Prostate gland (tissue), 2 donors: ENCODE measurements at regions of chr2 and their contacts with region 1.

Region 1: GRCh38 chr2:217899231-217900009 is 103.4 kb downstream of the TNS1 start:
- DNase-seq: peak; percentile 75
- H3K4me3 ChIP-seq: no peak overlapping the region
- H3K27ac ChIP-seq: peak overlapping the region; percentile 91 to 92
- H3K4me1 ChIP-seq: peaks cover 10% of the 10 kb centered on the region
- H3K27me3 ChIP-seq: no peaks in the 10 kb centered on the region
- CTCF ChIP-seq: peak; percentile 30 to 93 (median 68)
- POLR2A ChIP-seq: peak; percentile 52

Region 2: DNA sequence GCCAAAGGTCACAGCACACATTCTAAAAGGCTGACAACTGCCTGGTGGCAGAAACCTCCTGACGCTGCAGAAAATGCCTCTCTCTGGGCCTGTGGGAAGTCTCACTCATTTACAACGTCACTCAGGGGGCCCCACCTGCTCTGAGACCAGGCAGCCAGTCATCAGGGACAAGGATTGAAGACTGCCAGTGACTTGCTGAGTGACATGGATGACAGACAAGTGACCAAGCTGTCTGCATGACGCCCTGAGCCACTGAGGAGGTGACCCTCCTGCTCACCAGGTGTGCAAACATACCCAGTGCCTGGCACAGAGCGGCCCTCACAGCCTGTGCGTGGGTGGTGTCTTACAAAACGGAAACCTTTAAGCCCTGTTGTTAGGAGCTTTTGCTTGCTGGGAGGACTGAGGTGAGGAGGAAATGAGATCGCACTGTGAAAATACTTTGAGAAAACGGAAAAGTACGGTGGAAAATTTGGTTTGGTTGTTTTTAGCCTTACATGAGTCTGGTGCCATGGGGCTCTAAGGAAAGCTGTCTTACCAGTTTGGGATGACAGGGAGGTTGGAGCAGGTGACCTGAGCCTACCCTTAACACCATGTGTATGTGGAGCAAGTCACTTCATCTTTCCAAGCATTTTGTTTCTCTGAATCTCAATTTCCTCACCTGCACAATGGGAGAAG is 288.9 kb before region 1 on chr2:
- intact Hi-C with region 1: no loop called
- DNase-seq: no peak
- H3K4me3 ChIP-seq: no peak overlapping the region
- H3K27ac ChIP-seq: no peak overlapping the region
- H3K4me1 ChIP-seq: no peaks in the 10 kb centered on the region
- H3K27me3 ChIP-seq: no peaks in the 10 kb centered on the region
- CTCF ChIP-seq: no peak
- POLR2A ChIP-seq: no peak

Region 3: DNA sequence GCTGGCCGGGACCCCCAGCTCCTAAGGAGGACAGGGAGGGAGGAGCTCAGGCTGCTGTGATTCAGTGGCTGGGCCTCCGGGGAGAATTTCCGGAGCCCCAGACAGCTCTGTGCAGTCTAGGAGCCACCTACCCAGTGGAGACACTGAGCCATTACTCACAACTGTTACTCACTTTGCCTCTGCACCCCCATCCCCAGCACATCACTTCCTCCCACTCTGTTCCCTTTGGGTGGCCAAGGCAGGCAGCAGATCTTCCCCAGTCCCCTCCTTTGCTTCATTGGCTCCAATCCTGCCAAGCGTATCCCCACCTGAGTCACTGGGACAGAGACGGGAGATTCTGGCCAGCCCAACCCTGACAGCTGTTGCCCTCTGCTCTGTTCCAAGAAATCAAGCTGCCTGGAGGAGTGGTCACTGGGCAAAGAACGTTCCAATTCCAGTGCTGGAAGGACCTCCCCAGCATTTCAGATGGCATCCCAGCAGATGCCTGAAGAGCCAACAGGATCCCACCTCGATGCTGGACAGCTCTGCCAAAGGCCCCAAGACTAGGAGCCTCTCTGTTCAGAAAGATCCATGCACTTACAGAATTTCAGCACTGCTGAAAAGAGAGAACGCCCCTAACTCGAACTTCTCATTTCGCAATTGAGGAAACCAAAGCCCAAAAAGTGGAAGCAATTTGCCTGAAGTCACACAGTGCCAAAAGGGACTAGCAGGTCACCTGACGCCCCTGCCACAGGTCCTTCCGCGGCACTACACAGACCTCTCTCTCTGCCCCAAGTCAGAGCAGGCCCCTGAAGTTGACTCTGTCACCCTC is 35.1 kb after region 1 on chr2:
- intact Hi-C with region 1: loop called (anchors 5 kb)
- DNase-seq: no peak
- H3K4me3 ChIP-seq: peak overlapping the region in 1 of 2 donors; percentile 6
- H3K27ac ChIP-seq: peak overlapping the region; percentile 91 to 92
- H3K4me1 ChIP-seq: peaks cover 16% of the 10 kb centered on the region
- H3K27me3 ChIP-seq: no peaks in the 10 kb centered on the region
- CTCF ChIP-seq: no peak
- POLR2A ChIP-seq: peak; percentile 14